Gastrocnemius medialis (tissue), 4 donors: ENCODE measurements at regions of chr3 and their contacts with region 1.

Region 1: GRCh38 chr3:94062431-94063404 is at the starts of genes DHFR2 and NSUN3:
- DNase-seq: peak; percentile 73 to 84
- ATAC-seq: peak; percentile 94 to 98
- H3K4me3 ChIP-seq: peak within 1 kb of the TSS; percentile 68 to 92 (median 80)
- H3K27ac ChIP-seq: peak within 1 kb of the TSS; percentile 75 to 88 (median 86)
- H3K4me1 ChIP-seq: peaks cover 8 to 11% of the 10 kb centered on the region in 2 donors
- H3K27me3 ChIP-seq: no peaks in the 10 kb centered on the region
- CTCF ChIP-seq: no peak
- POLR2A ChIP-seq: peak in 1 of 2 donors; percentile 16
- total RNA-seq, gene DHFR2: 1.2 to 2.1 (median 1.4) TPM
- total RNA-seq, gene NSUN3: 1.4 to 2.5 (median 2.1) TPM

Region 2: DNA sequence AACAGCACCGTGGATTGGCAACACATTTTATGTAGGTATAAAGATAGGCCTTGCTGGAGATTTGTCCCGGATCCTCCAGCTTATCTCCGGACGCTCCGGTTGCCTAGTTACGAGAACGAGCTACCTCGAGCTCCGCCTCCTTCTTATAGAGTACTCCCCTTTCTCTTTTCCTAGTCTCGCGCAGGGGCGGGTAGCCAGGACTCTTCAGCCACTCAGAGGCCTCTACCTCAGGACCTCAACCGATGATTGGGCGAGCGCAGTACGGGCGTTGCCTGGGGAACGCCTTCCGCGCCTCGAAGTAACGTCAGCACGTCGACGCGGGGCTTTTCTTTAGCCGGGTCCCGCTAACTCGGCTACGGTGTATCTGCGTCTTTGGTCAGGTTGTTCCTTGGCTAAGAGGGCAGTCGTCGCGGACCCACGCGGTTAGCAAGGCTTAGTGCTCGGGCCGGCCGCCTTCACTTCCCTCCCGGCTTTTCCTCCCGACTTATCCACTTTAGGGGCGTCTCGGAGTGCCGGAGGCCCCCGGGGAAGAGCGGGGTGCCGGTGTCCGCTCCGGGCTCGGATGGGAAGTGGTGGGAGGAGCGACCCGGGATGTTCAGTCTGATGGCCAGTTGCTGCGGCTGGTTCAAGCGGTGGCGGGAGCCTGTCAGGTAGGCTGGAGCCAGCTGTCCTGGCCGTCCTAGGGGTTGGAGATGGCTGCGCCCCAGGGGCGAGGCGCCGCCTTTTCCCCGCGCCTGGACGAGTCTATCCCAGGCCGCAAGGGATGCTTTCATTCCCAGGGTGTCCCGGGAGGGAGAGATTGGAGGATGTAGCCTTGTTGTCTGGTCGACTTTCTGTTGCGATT is 82.7 kb before region 1 on chr3 and contains the start of gene ARL13B:
- in situ Hi-C with region 1: no loop called
- intact Hi-C with region 1: loop called (anchors 5 kb)
- DNase-seq: peak; percentile 97
- ATAC-seq: peak; percentile 99
- H3K4me3 ChIP-seq: peak within 1 kb of the TSS; percentile 72 to 93 (median 82)
- H3K27ac ChIP-seq: peak within 1 kb of the TSS; percentile 82 to 96 (median 86)
- H3K4me1 ChIP-seq: peaks cover 10 to 11% of the 10 kb centered on the region in 2 donors
- H3K27me3 ChIP-seq: no peaks in the 10 kb centered on the region
- CTCF ChIP-seq: no peak
- POLR2A ChIP-seq: peak; percentile 68 to 83
- total RNA-seq, gene ARL13B: 1.2 to 2.7 (median 1.4) TPM

Region 3: GRCh38 chr3:94004301-94004910 is 58.3 kb before region 1 on chr3:
- in situ Hi-C with region 1: loop called in 2 of 4 experiments (anchors 10 kb)
- intact Hi-C with region 1: no loop called
- DNase-seq: no peak
- ATAC-seq: peak; percentile 73 to 84
- H3K4me3 ChIP-seq: peak overlapping the region; percentile 21 to 47 (median 30)
- H3K27ac ChIP-seq: no peak overlapping the region
- H3K4me1 ChIP-seq: peaks cover 0 to 4% of the 10 kb centered on the region in 2 donors
- H3K27me3 ChIP-seq: no peaks in the 10 kb centered on the region
- CTCF ChIP-seq: peak in 4 of 5 experiments; percentile 20 to 74 (median 65)
- POLR2A ChIP-seq: no peak

Region 4: DNA sequence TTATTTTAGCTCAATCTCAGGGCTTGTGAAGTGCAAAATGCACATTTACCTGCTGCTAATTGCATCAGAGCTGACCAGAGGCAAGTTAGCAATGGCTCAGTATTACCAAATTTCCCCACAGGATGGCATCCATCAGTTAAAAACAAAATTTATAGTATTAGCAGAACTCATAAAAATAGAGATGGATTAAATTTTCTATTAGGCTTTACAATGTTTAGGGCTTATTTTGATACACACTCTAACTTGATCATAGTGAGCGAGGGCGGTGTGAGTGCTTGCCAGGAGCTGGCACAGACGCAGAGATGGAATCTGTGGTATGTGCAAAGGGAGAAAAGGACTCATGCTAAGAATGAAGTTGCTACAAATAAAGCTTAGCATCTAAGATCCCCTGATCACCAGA is 241.2 kb after region 1 on chr3:
- in situ Hi-C with region 1: no loop called
- intact Hi-C with region 1: no loop called
- DNase-seq: no peak
- ATAC-seq: no peak
- H3K4me3 ChIP-seq: no peak overlapping the region
- H3K27ac ChIP-seq: no peak overlapping the region
- H3K4me1 ChIP-seq: no peaks in the 10 kb centered on the region
- H3K27me3 ChIP-seq: no peaks in the 10 kb centered on the region
- CTCF ChIP-seq: no peak
- POLR2A ChIP-seq: no peak

Region 5: DNA sequence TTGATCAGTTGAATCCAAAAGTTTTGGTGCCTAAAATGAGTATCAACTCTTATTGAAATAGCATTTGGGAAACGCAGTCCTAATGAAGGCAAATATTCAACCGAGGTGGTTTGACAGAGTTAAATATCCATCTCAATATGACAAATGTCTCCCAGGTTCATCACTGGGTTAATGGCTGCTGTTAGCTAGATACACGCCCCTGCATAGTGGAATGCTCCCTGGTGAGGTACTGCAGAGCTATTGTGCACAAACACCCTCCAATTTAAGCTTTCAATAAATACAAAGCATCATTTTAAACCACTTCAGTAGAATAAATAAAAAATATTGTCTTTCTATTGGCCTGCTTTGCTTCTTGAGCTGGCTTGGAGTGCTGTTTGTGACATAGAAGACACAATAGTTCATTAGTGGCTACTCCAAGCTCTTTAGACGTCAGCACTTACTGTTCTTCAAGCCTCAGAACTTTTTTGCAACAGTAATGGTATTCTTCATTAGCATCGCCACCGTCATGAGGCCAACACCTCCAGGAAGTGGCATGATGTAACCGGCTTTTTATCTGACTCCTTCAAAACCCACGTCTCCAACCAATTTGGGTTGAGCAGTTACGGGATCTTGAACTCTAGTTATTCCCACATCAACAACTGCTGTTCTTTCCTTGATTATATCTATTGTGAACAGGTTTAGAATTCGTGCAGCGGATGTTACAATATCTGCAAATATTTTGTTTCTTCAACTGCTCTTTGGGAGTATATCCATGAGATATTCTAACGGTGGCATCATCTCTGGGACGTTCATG is 1592.0 kb after region 1 on chr3:
- in situ Hi-C with region 1: no loop called
- intact Hi-C with region 1: no loop called
- DNase-seq: no peak
- ATAC-seq: no peak
- H3K4me3 ChIP-seq: no peak overlapping the region
- H3K27ac ChIP-seq: no peak overlapping the region
- H3K4me1 ChIP-seq: no peaks in the 10 kb centered on the region
- H3K27me3 ChIP-seq: no peaks in the 10 kb centered on the region
- CTCF ChIP-seq: no peak
- POLR2A ChIP-seq: no peak